ENCODE measurements at regions of chr11 and their contacts with region 1.

Region 1: GRCh38 chr11:101894505-101894904 is 20.3 kb upstream of the CEP126 start:
- DNase-seq: no peak
- ATAC-seq: no peak

Region 2: GRCh38 chr11:103257360-103257759 is 1362.9 kb after region 1 on chr11:
- intact Hi-C with region 1: loop called (anchors 5 kb)
- DNase-seq: no peak
- ATAC-seq: no peak

Measured in sciatic nerve (tissue), 2 donors.